AG04449 (cell line): ENCODE measurements at regions of chr19 and their contacts with region 1.

Region 1: DNA sequence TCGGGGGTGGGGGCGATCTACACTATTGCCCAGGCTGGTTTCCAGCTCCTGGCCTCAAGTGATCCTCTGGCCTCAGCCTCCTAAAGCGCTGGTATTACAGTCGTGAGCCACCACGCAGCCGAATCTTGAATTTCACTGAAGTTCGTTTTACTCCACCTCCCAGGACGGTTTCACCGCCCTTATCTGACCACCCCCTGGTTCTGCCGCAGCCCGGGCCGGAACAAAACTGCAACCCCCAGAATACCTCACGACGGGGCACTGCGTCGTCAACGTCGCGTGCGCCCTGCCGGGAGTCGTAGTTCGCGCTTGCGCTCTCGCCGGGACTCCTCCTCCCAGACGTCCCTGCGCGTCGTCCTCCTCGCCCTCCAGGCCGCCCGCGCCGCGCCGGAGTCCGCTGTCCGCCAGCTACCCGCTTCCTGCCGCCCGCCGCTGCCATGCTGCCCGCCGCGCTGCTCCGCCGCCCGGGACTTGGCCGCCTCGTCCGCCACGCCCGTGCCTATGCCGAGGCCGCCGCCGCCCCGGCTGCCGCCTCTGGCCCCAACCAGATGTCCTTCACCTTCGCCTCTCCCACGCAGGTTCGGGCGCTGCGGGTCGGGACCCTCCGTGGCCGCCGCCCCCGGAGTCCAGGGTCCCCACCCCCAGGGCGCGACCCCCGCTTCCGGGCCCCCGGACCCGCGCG is at the start of gene ATP5F1D:
- DNase-seq: no peak
- H3K4me3 ChIP-seq: peak within 1 kb of the TSS; percentile 72
- CTCF ChIP-seq: no peak

Region 2: DNA sequence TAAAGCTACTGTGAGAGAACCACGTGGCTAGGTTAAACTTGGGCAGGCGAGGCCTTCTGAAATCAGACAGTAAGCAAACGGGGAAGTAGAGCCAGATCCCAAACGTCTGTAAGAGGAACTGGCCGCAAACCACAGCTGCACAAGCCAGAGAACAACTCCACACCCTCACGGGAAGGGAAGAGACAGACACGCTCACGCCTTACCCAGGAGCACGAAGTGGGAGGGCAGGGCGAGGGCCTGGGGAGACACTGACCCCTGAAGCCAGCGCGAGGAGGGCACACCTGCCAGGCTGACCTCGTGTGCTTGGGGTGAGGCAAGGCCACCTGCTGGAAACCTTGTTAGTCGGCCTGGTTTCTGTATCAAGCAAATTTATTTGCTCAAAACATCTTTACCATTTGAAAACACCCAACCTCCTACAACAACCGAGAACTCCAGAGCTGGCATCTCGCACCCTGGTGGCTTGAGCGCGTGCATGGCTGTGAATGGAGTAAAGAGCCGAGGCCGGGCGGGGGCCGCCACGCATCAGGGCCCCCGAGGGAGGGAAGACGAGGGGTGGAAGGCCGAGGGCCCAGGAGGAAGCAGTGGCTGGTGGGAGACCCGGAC is 153.6 kb before region 1 on chr19:
- CTCF ChIA-PET with region 1: no interaction called
- POLR2A ChIA-PET with region 1: no interaction called
- DNase-seq: no peak
- H3K4me3 ChIP-seq: no peak overlapping the region
- CTCF ChIP-seq: no peak

Region 3: DNA sequence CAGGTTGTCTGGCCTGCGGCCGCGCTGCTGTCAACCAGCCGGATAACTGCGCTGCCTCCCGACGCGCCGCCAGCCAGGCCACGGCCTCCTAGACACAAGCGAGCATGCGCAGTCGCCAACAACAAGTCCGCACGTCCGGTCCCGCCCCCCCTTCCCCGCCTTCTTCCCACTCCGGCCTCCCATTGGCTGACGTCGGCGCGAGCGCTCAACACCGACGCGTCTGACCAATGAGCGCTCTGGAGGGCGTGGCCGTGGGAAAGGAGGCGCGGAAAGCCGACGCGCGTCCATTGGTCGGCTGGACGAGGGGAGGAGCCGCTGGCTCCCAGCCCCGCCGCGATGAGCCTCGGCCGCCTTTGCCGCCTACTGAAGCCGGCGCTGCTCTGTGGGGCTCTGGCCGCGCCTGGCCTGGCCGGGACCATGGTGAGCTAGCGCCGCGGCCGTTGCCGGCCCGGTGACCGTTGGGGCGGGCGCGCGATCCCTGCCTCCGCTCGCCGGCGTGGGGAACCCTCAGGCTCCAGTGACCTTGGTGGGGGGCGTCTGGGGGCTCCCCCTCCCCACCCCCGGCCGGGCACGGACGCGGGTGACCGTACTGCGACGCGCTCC is 137.7 kb before region 1 on chr19 and contains the start of gene GPX4:
- CTCF ChIA-PET with region 1: interaction called, 11 read pairs
- POLR2A ChIA-PET with region 1: interaction called, 3 read pairs
- DNase-seq: peak; percentile 93
- H3K4me3 ChIP-seq: peak within 1 kb of the TSS; percentile 78
- CTCF ChIP-seq: no peak

Region 4: GRCh38 chr19:1213391-1214286 is 27.9 kb before region 1 on chr19:
- CTCF ChIA-PET with region 1: interaction called, 12 read pairs
- POLR2A ChIA-PET with region 1: no interaction called
- DNase-seq: no peak
- H3K4me3 ChIP-seq: no peak overlapping the region
- CTCF ChIP-seq: no peak

Region 5: DNA sequence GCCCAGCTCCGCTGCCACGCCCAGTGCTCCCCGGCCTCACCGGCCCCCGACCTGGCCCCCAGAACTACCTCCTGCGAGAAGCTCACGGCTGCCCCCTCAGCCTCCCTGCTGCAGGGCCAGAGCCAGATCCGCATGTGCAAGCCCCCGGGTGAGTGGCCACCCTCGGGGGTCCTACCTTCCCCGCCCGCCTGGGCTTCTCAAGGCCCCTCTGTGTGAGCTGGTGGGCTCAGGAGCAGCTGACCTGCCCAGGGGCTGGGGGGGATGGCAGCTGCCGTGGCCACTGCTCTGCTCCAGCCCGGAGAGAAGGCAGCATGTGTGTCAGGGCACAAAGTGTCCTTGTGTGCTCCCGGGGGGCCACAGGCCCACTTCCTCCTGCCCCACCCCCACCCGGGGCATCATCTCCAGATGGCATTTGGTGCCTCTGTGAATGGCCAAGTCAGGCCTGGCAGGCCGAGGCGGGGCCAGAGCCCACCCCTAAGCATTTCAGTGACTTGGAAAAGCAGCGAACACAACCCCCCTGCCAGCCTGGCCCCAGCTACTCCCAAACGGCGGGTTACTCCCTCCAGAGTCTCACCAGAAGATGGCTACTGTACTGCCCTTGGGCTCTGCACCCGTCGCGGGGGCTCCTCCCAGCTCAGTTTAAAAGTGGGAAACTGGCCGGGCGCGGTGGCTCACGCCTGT is 14.1 kb after region 1 on chr19:
- CTCF ChIA-PET with region 1: interaction called, 626 read pairs
- POLR2A ChIA-PET with region 1: interaction called, 6 read pairs
- DNase-seq: no peak
- H3K4me3 ChIP-seq: no peak overlapping the region
- CTCF ChIP-seq: no peak

Region 6: GRCh38 chr19:1275260-1275975 is 33.9 kb after region 1 on chr19 and contains the start of gene FAM174C:
- CTCF ChIA-PET with region 1: interaction called, 46 read pairs
- POLR2A ChIA-PET with region 1: interaction called, 9 read pairs
- DNase-seq: peak; percentile 80
- H3K4me3 ChIP-seq: peak within 1 kb of the TSS; percentile 70
- CTCF ChIP-seq: no peak

Region 7: GRCh38 chr19:1318678-1319471 is 77.3 kb after region 1 on chr19:
- CTCF ChIA-PET with region 1: no interaction called
- POLR2A ChIA-PET with region 1: no interaction called
- DNase-seq: no peak
- H3K4me3 ChIP-seq: no peak overlapping the region
- CTCF ChIP-seq: no peak